ENCODE measurements at regions of chr11 and their contacts with region 1.

Region 1: GRCh38 chr11:32052218-32052617 is 38.7 kb upstream of the RCN1 start:
- DNase-seq: no peak
- H3K4me3 ChIP-seq: no peak overlapping the region
- CTCF ChIP-seq: peak; percentile 58

Region 2: GRCh38 chr11:31676280-31676982 is 375.8 kb before region 1 on chr11:
- CTCF ChIA-PET with region 1: no interaction called
- POLR2A ChIA-PET with region 1: no interaction called
- DNase-seq: no peak
- H3K4me3 ChIP-seq: no peak overlapping the region
- CTCF ChIP-seq: no peak

Region 3: GRCh38 chr11:32034149-32034548 is 18.1 kb before region 1 on chr11:
- CTCF ChIA-PET with region 1: interaction called, 152 read pairs
- POLR2A ChIA-PET with region 1: no interaction called
- DNase-seq: peak; percentile 100
- H3K4me3 ChIP-seq: no peak overlapping the region
- CTCF ChIP-seq: no peak

Region 4: GRCh38 chr11:32090545-32091373 is 38.5 kb after region 1 on chr11 and contains the start of gene RCN1:
- CTCF ChIA-PET with region 1: interaction called, 11 read pairs
- POLR2A ChIA-PET with region 1: no interaction called
- DNase-seq: no peak
- H3K4me3 ChIP-seq: peak within 1 kb of the TSS; percentile 82
- CTCF ChIP-seq: no peak

Region 5: GRCh38 chr11:32154275-32154674 is 102.1 kb after region 1 on chr11:
- CTCF ChIA-PET with region 1: interaction called, 76 read pairs
- POLR2A ChIA-PET with region 1: no interaction called
- DNase-seq: no peak
- H3K4me3 ChIP-seq: no peak overlapping the region
- CTCF ChIP-seq: no peak

Region 6: GRCh38 chr11:32184041-32184722 is 132.0 kb after region 1 on chr11:
- CTCF ChIA-PET with region 1: interaction called, 14 read pairs
- POLR2A ChIA-PET with region 1: no interaction called
- DNase-seq: no peak
- H3K4me3 ChIP-seq: no peak overlapping the region
- CTCF ChIP-seq: no peak